ENCODE measurements at regions of chr1 and their contacts with region 1.

Region 1: GRCh38 chr1:207017615-207018559 is 14.7 kb downstream of the C1orf116 start:
- DNase-seq: no peak
- ATAC-seq: no peak
- H3K4me3 ChIP-seq: no peak overlapping the region
- H3K4me3 Mint-ChIP-seq: no peak overlapping the region
- H3K27ac ChIP-seq: no peak overlapping the region
- H3K27ac Mint-ChIP-seq: no peak overlapping the region
- H3K4me1 ChIP-seq: no peaks in the 10 kb centered on the region
- H3K4me1 Mint-ChIP-seq: no peaks in the 10 kb centered on the region
- H3K27me3 ChIP-seq: no peaks in the 10 kb centered on the region
- H3K27me3 Mint-ChIP-seq: peaks cover 17% of the 10 kb centered on the region
- CTCF ChIP-seq: no peak

Region 2: DNA sequence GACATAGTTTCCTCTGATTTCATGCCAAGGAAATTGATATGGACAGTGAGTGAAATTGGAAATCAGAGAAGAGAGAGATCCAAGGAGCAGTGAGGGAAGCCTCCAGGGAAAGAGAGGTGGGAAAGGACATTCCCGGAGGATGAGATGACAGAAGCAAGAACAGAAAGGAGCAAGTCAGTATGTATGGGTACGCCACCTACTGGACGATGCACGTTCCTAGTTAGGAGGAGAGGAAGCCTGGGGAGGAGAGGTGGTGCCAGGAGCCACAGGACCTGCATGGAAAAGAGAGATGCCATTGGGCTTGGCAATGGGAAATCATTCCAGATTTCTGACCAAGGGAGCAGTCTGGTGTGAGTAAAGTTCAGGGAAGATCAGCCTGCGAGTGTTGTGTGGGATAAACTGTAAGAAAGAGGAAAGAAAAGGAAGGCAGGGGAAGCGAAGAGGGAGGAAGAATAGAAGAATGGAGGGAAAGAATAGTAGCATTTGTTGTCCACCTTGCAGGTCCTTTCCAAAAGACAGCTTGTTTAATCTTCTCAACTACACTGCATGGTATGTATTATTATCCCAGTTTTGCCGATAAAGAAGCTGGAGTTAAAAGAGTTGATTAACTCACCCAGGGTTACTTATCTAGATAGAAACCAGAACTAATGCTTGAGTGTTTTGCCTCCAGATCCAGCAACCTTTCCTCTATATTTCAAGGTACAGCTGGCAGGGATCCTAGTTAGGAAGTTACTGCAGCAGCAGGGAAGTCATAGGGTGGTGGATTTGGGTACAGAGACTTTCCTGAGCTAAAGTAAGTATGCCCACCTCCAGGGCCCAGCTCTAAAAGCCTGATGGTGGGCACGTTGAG is 12.7 kb before region 1 on chr1:
- CTCF ChIA-PET with region 1: interaction called, 15 read pairs
- POLR2A ChIA-PET with region 1: no interaction called
- intact Hi-C with region 1: no loop called
- DNase-seq: peak in 7 of 9 experiments; percentile 9 to 58 (median 41)
- ATAC-seq: peak; percentile 51
- H3K4me3 ChIP-seq: no peak overlapping the region
- H3K4me3 Mint-ChIP-seq: no peak overlapping the region
- H3K27ac ChIP-seq: no peak overlapping the region
- H3K27ac Mint-ChIP-seq: no peak overlapping the region
- H3K4me1 ChIP-seq: no peaks in the 10 kb centered on the region
- H3K4me1 Mint-ChIP-seq: peaks cover 2% of the 10 kb centered on the region
- H3K27me3 ChIP-seq: no peaks in the 10 kb centered on the region
- H3K27me3 Mint-ChIP-seq: peaks cover 3% of the 10 kb centered on the region
- CTCF ChIP-seq: peak; percentile 63

Region 3: DNA sequence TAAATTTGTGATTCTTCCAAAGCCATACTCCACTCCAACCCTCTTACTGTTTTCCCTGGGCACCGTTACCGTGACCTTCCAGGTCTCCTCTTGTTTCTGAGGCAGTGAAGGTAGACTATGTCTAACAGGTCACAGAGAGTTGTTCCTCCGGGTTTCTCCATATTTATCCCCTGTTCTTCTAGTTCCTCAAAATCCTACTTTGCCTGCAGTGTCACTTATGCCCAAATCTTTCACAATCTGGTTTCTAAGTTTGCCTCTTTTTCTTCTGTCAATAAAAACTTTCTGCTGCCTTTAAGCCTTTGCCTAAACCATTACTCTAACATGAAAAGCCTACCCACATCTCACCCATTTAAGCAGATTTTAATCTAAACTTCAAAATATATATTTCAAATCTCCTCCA is 173.9 kb after region 1 on chr1:
- CTCF ChIA-PET with region 1: no interaction called
- POLR2A ChIA-PET with region 1: no interaction called
- intact Hi-C with region 1: loop called in 1 of 2 experiments (anchors 10 kb)
- DNase-seq: no peak
- ATAC-seq: no peak
- H3K4me3 ChIP-seq: no peak overlapping the region
- H3K4me3 Mint-ChIP-seq: no peak overlapping the region
- H3K27ac ChIP-seq: no peak overlapping the region
- H3K27ac Mint-ChIP-seq: no peak overlapping the region
- H3K4me1 ChIP-seq: peaks cover 5% of the 10 kb centered on the region
- H3K4me1 Mint-ChIP-seq: peaks cover 9% of the 10 kb centered on the region
- H3K27me3 ChIP-seq: peaks cover 0 to 2% of the 10 kb centered on the region in 2 experiments
- H3K27me3 Mint-ChIP-seq: peaks cover 7% of the 10 kb centered on the region
- CTCF ChIP-seq: no peak